Activated CD4-positive, alpha-beta T cell treated with anti-CD3 and anti-CD28 coated beads for 36 hours (primary cell): ENCODE measurements at regions of chr1 and their contacts with region 1.

Region 1: DNA sequence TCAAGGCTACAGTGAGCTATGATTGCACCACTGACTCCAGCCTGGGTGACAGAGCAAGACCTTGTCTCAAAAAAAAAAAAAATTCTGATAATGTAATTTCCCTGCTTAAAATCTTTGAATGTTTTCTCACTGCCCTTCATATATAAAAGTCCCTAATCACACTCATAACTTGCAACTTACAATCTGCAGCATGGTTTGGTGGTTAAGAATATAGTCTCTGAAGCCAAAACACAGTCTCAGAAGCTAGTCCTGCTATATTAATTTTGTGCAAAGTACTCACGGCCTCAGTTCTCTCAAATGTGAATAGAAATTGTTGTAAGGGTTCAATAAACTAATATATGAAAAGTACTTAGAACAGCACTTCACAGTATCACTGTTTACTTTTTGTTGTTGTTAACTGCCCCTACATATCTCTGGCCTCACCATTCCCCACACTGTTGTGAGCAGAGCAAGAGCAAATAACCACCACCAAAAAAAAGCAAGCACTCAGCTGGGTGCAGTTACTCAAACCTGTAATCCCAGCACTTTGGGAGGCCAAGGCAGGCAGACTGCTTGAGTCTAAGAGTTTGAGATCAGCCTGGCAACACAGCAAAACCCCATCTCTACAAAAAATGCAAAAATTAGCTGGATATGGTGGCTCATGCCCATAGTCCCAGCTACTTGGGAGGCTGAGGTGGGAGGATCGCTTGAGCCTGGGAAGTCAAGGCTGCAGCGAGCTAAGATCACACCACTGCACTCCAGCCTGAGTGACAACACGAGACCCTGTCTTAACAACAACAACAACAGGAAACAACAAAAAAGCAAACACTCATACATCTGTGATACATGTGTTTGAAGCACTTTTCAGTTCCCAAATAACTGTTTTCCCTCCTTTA is 22.4 kb downstream of the ASH1L start:
- DNase-seq: peak; percentile 41
- ATAC-seq: no peak
- H3K4me3 Mint-ChIP-seq: no peak overlapping the region
- H3K27ac Mint-ChIP-seq: peak overlapping the region; percentile 86
- H3K4me1 Mint-ChIP-seq: peaks cover 61% of the 10 kb centered on the region
- H3K27me3 Mint-ChIP-seq: no peaks in the 10 kb centered on the region

Region 2: DNA sequence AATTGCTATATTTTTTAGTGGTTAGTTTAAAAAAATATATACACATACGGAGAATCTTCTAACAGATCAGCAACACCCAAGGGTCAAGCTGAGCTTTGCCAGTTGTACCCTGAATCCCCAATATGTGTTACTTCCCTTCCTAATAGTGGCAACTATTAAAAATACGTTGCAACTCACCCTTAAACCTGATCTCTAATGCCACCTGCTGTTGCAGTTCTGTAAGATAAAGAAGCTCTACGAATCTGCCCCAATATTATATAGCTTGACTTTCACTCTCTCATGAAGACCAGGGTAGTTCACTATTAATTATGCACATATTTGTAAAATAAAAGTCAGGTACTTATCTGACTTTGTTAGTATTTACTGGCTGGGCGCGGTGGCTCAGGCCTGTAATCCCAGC is 36.0 kb before region 1 on chr1:
- CTCF ChIA-PET with region 1: interaction called, 3 read pairs
- POLR2A ChIA-PET with region 1: interaction called, 3 read pairs
- intact Hi-C with region 1: loop called in 1 of 2 experiments (anchors 5 kb)
- DNase-seq: no peak
- ATAC-seq: no peak
- H3K4me3 Mint-ChIP-seq: no peak overlapping the region
- H3K27ac Mint-ChIP-seq: no peak overlapping the region
- H3K4me1 Mint-ChIP-seq: peaks cover 40% of the 10 kb centered on the region
- H3K27me3 Mint-ChIP-seq: no peaks in the 10 kb centered on the region